A549 (cell line): ENCODE measurements at regions of chr14 and their contacts with region 1.

Region 1: GRCh38 chr14:65412032-65412846 is at the start of gene FUT8:
- DNase-seq: peak; percentile 84 to 96
- ATAC-seq: peak; percentile 85 to 91
- H3K4me3 ChIP-seq: peak within 1 kb of the TSS; percentile 86
- H3K27ac ChIP-seq: peak within 1 kb of the TSS; percentile 88 to 98
- H3K4me1 ChIP-seq: peaks cover 14% of the 10 kb centered on the region; the same call in 2 of the 3 replicates
- CTCF ChIP-seq: peak; percentile 56
- EP300 ChIP-seq: no peak
- POLR2A ChIP-seq: peak; percentile 96
- RAD21 ChIP-seq: peak; percentile 35 to 76; a peak in 4 of 5 replicates
- polyA plus RNA-seq, gene FUT8: 20.3 and 27.5 TPM in 2 replicates

Region 2: GRCh38 chr14:65102441-65103149 is 309.6 kb before region 1 on chr14 and contains the start of gene MAX:
- CTCF ChIA-PET with region 1: interaction called, 3 read pairs
- POLR2A ChIA-PET with region 1: interaction called, 21 read pairs
- DNase-seq: peak; percentile 96 to 98
- ATAC-seq: peak; percentile 93 to 96
- H3K4me3 ChIP-seq: peak within 1 kb of the TSS; percentile 95
- H3K27ac ChIP-seq: peak within 1 kb of the TSS; percentile 85 to 92
- H3K4me1 ChIP-seq: peaks cover 8% of the 10 kb centered on the region; the same call in 1 of the 3 replicates
- CTCF ChIP-seq: no peak
- EP300 ChIP-seq: no peak
- POLR2A ChIP-seq: peak; percentile 65
- RAD21 ChIP-seq: no peak; a peak in 1 of 5 replicates
- polyA plus RNA-seq, gene MAX: 42.9 and 53.2 TPM in 2 replicates

Region 3: GRCh38 chr14:65170768-65171507 is 241.3 kb before region 1 on chr14:
- CTCF ChIA-PET with region 1: interaction called, 137 read pairs
- POLR2A ChIA-PET with region 1: interaction called, 19 read pairs
- DNase-seq: peak; percentile 43 to 57
- ATAC-seq: peak; percentile 91 to 93
- H3K4me3 ChIP-seq: peak overlapping the region; percentile 42
- H3K27ac ChIP-seq: peak overlapping the region; percentile 65 to 67
- H3K4me1 ChIP-seq: peaks cover 4% of the 10 kb centered on the region; the same call in 1 of the 3 replicates
- CTCF ChIP-seq: peak; percentile 43
- EP300 ChIP-seq: no peak
- POLR2A ChIP-seq: no peak
- RAD21 ChIP-seq: peak; percentile 53 to 64

Region 4: GRCh38 chr14:65222440-65222858 is 189.8 kb before region 1 on chr14:
- CTCF ChIA-PET with region 1: interaction called, 42 read pairs
- POLR2A ChIA-PET with region 1: interaction called, 14 read pairs
- DNase-seq: peak in 1 of 2 experiments; percentile 53
- ATAC-seq: peak; percentile 49 to 77; a peak in 5 of 6 replicates
- H3K4me3 ChIP-seq: no peak overlapping the region
- H3K27ac ChIP-seq: peak overlapping the region; percentile 20 to 62; a peak in 3 of 6 replicates
- H3K4me1 ChIP-seq: peaks cover 21% of the 10 kb centered on the region
- CTCF ChIP-seq: peak; percentile 75
- EP300 ChIP-seq: no peak
- POLR2A ChIP-seq: no peak
- RAD21 ChIP-seq: peak; percentile 80 to 85

Region 5: DNA sequence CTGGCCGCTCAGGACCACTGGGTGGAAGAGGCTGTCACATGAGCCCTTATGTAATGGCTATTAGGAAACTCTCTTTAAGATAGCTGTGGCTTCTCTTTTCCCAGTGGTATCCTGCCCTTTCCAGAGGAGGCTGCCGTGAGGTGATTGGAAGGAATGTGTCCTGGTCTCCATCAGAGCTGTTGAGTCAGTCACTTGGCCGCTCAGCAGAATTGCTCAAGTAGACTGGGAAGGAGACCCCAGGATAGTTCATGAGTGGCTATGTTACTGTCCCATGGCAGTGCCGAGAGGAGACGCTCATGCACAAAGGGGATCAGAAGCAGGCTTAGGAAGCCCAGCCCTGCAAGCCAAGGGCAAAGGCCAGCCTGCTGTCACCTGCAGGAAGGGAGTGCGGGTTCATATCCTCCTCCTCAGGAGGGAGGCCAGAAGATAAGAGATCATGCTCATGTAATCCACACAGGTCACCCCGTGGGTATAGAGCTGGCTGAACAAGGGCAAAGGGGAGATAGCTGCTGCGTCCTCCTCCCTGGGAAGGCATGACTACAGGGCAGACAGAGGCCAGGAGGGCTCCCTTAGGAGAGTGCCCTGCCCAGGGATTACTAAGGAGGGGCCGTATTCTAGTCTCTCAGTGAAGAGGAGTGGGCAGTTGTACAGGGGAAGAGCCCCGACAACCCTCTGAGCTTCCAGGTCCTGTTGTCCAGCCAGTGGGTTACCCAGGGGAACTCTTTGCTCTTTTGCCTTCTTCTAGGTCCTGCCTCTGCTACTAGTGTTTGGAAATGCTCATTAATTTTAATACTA is 172.9 kb before region 1 on chr14:
- CTCF ChIA-PET with region 1: interaction called, 7 read pairs
- POLR2A ChIA-PET with region 1: interaction called, 21 read pairs
- DNase-seq: no peak
- ATAC-seq: peak in 1 of 2 experiments; percentile 5; a peak in 2 of 6 replicates
- H3K4me3 ChIP-seq: no peak overlapping the region
- H3K27ac ChIP-seq: peak overlapping the region; percentile 74 to 85
- H3K4me1 ChIP-seq: peaks cover 64% of the 10 kb centered on the region
- CTCF ChIP-seq: no peak
- EP300 ChIP-seq: no peak
- POLR2A ChIP-seq: no peak
- RAD21 ChIP-seq: no peak

Region 6: GRCh38 chr14:65824285-65824977 is 412.2 kb after region 1 on chr14:
- CTCF ChIA-PET with region 1: interaction called, 108 read pairs
- POLR2A ChIA-PET with region 1: interaction called, 7 read pairs
- DNase-seq: peak; percentile 58 to 69
- ATAC-seq: peak; percentile 72 to 90; a peak in 5 of 6 replicates
- H3K4me3 ChIP-seq: no peak overlapping the region
- H3K27ac ChIP-seq: no peak overlapping the region
- H3K4me1 ChIP-seq: no peaks in the 10 kb centered on the region
- CTCF ChIP-seq: peak; percentile 88
- EP300 ChIP-seq: no peak
- POLR2A ChIP-seq: no peak
- RAD21 ChIP-seq: peak; percentile 74 to 77

Region 7: DNA sequence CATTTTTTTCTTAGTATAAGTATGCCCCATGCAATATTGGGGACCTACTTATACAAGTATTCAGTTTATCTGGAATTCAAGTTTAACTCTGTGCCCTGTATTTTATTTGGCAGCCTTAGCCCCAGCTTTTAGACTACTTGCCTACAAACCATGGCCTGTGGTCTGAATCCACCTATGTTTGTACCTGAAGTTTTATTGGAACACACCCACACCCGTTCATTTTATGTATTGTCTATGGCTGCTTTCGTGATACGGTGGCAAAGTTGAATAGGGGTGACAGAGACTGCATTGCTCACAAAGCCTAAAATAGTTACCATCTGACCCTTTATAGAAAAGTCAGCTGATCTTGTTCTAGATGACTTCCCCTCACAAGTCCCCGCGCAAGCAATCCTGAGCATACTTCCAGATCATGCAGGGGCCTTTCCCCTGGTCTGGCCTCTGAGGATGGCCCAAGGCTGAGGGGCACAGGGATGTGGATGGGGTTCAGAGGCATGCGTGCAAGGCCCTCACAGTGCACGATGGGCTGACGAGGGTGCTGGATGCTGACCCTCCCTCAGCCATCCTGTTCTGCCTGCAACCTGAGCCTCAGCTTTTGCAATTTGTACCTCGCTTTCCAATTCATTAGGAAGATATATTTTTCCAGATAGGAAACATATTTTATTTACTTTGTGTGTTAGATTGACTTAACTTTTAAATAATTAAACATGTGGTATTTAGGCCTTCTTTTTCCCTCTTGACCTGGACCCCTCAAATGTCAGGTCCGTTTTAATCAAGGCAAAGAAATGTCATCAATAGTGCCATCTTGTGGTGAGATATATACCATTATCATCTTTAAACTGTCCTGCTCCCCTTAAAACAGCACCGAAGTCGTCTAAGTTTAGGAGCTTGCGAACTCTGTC is 546.7 kb after region 1 on chr14:
- CTCF ChIA-PET with region 1: interaction called, 34 read pairs
- POLR2A ChIA-PET with region 1: interaction called, 4 read pairs
- DNase-seq: peak; percentile 37 to 41
- ATAC-seq: peak in 1 of 2 experiments; percentile 84; a peak in 3 of 6 replicates
- H3K4me3 ChIP-seq: no peak overlapping the region
- H3K27ac ChIP-seq: no peak overlapping the region
- H3K4me1 ChIP-seq: no peaks in the 10 kb centered on the region
- CTCF ChIP-seq: peak; percentile 72
- EP300 ChIP-seq: no peak
- POLR2A ChIP-seq: no peak
- RAD21 ChIP-seq: peak; percentile 46 to 60